Esophagus squamous epithelium (tissue), 5 donors: ENCODE measurements at regions of chr6 and their contacts with region 1.

Region 1: DNA sequence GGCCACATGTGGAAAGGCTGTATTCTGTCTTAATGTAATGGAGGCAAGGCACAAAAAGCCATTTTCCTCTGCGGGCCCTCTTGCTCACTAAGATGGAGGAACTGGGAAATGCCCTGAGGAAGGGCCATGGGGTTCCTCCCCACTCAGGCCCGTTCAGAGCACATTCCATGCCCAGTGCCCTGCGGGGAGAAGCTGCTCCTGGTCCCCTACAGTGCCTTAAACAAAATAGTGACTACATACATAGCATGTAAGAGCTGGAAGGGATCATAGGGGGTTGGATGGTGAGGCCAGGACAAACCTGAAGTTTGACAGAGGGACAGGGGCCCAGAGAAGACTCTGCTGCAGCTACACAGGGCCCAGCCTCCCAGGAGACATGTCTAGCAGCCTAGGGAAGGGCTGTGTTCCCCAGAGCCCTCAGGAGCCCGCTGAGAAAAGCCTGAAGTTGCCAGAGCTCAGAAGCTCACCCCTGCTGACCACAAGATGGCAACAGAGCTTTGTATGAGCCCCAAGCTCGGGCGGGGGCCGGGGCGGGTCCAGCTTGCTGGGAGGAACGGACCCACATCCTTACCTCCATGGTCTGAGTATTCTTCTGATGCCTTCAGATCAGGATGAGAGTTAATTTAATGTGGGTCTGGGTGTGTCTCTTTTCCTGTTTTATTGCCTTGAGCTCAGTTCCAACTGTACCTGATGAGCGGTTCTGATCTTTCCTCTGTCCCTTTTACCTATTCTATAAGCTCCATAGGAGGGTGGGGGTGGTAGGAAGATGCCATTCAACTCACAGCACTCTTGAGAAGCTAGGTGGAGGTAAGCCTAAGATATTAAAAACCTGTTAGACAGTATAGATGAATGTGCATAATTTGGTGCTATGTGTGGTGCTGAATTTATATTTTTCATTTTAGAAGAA is 242.9 kb downstream of the CDC5L start:
- DNase-seq: no peak
- H3K4me3 ChIP-seq: no peak overlapping the region
- H3K27ac ChIP-seq: no peak overlapping the region
- H3K4me1 ChIP-seq: no peaks in the 10 kb centered on the region
- H3K27me3 ChIP-seq: peaks cover 0 to 31% (median 0%) of the 10 kb centered on the region in 4 donors
- CTCF ChIP-seq: peak in 2 of 6 experiments; percentile 7 to 34
- POLR2A ChIP-seq: no peak

Region 2: DNA sequence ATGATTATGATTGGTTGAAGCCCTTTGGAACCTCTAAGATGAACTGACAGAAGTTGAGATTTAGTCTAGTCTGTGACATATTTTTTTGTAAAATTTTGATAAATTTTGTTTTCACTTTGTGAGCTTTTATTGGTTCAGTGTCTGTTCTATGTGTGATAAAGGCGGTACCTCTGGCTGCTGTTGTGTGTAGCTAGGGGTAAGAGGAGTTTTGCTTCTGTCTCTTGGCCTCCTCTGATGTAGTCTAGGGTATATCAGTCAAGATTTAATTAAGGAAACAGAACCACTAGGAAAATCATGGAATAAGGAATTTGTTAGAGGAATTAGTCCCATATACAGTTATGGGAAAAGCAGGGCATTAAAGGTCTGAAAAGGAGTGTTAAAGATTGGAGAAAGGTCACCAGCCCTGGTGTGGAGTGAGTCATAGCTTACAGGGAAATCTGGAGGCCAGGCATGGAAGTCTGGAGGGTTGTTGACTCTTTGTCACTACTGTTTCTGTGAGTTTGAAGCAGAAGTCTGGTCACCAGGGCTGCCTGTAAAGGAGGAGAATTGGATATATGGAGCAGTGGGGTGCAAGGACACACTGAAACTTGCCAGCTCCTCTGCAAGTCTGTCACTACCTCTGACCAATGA is 214.4 kb before region 1 on chr6:
- intact Hi-C with region 1: no loop called
- DNase-seq: no peak
- H3K4me3 ChIP-seq: no peak overlapping the region
- H3K27ac ChIP-seq: no peak overlapping the region
- H3K4me1 ChIP-seq: peaks cover 0 to 10% (median 0%) of the 10 kb centered on the region in 3 donors
- H3K27me3 ChIP-seq: no peaks in the 10 kb centered on the region
- CTCF ChIP-seq: no peak
- POLR2A ChIP-seq: no peak

Region 3: DNA sequence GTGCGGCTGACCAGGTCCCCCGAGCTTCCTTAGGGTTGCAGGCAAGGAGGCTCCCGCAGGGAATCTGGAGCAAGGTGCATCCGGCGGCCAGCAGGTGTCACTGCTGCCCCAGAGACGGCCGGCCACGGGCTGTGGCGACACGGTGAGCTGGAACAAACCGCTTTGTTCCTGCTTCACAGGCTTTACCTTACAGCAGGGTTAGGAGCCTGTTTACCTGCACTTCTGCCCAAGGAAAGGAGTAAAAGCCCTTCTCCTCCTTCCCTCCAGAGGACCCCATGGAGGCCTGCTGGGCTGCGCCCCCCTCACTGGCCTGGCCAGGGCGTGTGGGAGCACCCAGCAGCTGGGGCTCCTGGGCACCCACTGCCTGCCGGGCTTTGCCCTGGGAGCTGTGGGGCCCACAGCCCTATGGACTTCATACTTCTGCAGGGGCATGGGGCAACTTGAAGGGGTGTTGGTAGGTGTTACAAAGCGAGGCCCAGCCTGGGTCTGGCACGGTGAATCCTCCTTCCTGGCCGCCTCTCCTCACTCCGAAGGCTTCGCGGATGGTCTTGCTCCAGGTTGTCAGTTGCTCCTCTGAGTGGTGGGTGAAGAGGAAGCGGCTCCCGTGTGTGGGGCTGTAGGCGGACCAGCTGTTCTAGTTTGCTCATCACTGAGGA is 154.5 kb before region 1 on chr6:
- intact Hi-C with region 1: loop called (anchors 10 kb)
- DNase-seq: no peak
- H3K4me3 ChIP-seq: peak overlapping the region in 1 of 4 donors; percentile 14
- H3K27ac ChIP-seq: no peak overlapping the region
- H3K4me1 ChIP-seq: peaks cover 0 to 16% (median 4%) of the 10 kb centered on the region in 3 donors
- H3K27me3 ChIP-seq: peaks cover 0 to 23% (median 0%) of the 10 kb centered on the region in 4 donors
- CTCF ChIP-seq: peak; percentile 83 to 94 (median 93)
- POLR2A ChIP-seq: no peak